A673 (cell line): ENCODE measurements at regions of chr12 and their contacts with region 1.

Region 1: GRCh38 chr12:122406701-122407164 is 15.7 kb downstream of the CLIP1 start:
- DNase-seq: peak; percentile 72
- H3K4me3 ChIP-seq: no peak overlapping the region
- H3K27ac ChIP-seq: peak overlapping the region; percentile 93
- H3K4me1 ChIP-seq: peaks cover 48% of the 10 kb centered on the region
- H3K27me3 ChIP-seq: no peaks in the 10 kb centered on the region
- CTCF ChIP-seq: no peak

Region 2: GRCh38 chr12:122421821-122422729 is 15.3 kb after region 1 on chr12 and contains the start of gene CLIP1:
- CTCF ChIA-PET with region 1: no interaction called
- POLR2A ChIA-PET with region 1: interaction called, 14 read pairs
- intact Hi-C with region 1: no loop called
- DNase-seq: peak; percentile 76
- H3K4me3 ChIP-seq: peak within 1 kb of the TSS; percentile 87
- H3K27ac ChIP-seq: peak within 1 kb of the TSS; percentile 96
- H3K4me1 ChIP-seq: peaks cover 17% of the 10 kb centered on the region
- H3K27me3 ChIP-seq: no peaks in the 10 kb centered on the region
- CTCF ChIP-seq: peak; percentile 56
- total RNA-seq, gene CLIP1: 52.1 and 62.2 TPM in 2 replicates